ENCODE measurements at regions of chr11 and their contacts with region 1.

Region 1: DNA sequence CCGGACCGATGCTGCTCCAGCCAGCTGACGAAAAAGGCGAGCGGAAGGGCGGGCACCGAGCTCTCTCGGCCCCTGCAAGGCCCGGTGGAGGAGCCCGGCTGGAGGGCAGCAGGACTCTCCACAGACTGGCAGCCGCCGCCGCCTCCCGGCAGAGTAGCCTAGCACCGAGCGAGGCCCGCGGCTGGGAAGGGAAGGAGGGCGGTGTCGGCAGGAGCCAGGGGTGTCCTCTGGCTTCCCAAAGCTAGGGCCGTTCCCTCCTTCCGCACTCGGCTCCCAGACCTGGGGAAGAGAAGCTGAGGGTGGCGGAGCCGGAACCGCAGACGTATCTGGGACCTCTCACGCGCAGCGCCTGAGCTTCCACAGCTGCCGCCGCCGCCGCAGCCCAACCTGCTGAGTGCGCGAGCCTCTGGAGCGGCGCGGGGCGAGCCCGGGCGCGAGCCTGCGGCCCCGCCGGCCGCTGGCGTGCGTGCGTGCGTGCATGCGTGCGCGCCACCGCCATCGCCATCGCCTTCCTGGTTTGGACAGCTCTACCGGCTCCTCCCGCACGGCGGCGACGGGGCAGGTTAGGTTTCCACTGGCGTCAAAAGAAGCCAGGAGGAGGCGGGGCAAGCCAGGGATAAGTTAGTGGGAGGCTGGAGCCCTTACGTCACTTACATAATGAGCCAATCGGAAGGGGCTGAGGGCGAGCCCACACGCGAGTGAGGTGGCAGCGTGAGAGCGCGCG is at the start of gene RAB6A:
- DNase-seq: peak; percentile 99 to 100 (median 100)

Region 2: GRCh38 chr11:73779084-73779902 is 18.5 kb after region 1 on chr11:
- intact Hi-C with region 1: loop called (anchors 1 kb)
- DNase-seq: peak; percentile 95 to 100 (median 99)